ENCODE measurements at regions of chr15 and their contacts with region 1.

Region 1: DNA sequence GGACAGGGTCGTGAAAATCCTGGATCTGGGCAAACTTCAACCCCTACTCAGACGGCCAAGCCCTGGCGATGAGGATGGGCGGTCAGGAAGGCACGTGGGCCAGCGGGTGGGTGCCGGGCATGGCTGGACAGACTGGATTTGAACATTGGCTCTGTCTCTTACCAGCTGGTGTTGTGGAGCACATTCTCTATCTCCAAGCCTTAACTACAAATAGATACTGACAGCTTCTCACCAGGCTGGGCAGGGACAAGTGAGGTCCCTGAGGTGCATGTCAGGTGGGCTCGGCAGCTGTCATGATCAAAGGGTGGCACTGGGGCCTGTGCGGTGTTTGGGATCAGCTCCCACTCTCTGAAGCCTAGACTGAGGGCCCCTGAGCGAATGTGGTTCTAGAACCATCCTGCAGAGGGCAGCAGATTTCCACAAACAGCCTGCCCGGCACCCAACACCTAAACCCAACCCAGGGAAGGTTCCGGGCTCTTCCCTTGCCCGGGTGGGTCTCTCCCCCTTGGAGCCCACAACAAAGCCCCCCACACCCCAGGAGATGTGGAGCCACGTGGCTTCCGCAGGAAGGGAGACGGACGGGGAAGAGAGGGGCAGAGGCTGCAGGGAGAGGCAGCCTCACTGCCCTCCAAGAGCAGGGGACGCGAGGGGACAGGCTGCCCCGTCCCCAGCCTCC is 58.4 kb downstream of the RGMA start:
- DNase-seq: no peak
- H3K4me3 ChIP-seq: no peak overlapping the region
- H3K27me3 ChIP-seq: no peaks in the 10 kb centered on the region
- CTCF ChIP-seq: peak; percentile 84

Region 2: GRCh38 chr15:92797168-92797951 is 233.2 kb before region 1 on chr15:
- CTCF ChIA-PET with region 1: interaction called, 13 read pairs
- POLR2A ChIA-PET with region 1: no interaction called
- DNase-seq: no peak
- H3K4me3 ChIP-seq: no peak overlapping the region
- H3K27me3 ChIP-seq: no peaks in the 10 kb centered on the region
- CTCF ChIP-seq: peak; percentile 57

Region 3: GRCh38 chr15:93087825-93088199 is 57.2 kb after region 1 on chr15:
- CTCF ChIA-PET with region 1: interaction called, 10 read pairs
- POLR2A ChIA-PET with region 1: no interaction called
- DNase-seq: no peak
- H3K4me3 ChIP-seq: no peak overlapping the region
- H3K27me3 ChIP-seq: peaks cover 33% of the 10 kb centered on the region
- CTCF ChIP-seq: peak; percentile 79

Region 4: GRCh38 chr15:93974804-93975481 is 944.4 kb after region 1 on chr15:
- CTCF ChIA-PET with region 1: interaction called, 20 read pairs
- POLR2A ChIA-PET with region 1: no interaction called
- DNase-seq: no peak
- H3K4me3 ChIP-seq: no peak overlapping the region
- H3K27me3 ChIP-seq: no peaks in the 10 kb centered on the region
- CTCF ChIP-seq: peak; percentile 34; the same call in 1 of the 2 replicates

Region 5: DNA sequence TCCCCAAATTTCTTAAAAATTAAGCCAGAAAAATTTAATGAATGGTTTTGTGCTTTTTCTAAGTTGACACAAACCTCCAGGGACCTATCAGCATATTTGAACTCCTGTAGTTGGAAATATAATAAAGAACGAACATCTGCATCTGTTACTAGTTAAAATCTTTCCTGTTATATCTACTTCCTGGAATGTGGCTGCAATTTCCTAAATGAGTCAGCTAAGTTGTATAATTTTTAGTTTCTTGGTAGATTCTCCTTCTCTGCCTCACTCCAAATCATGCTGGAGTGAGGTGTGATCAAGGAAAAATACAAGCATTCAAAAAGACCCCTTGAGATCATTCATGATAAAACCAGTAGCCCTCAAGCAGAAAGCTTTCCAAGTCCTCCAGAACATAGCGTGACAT is 1094.6 kb after region 1 on chr15:
- CTCF ChIA-PET with region 1: interaction called, 74 read pairs
- POLR2A ChIA-PET with region 1: interaction called, 4 read pairs
- DNase-seq: peak; percentile 31
- H3K4me3 ChIP-seq: no peak overlapping the region
- H3K27me3 ChIP-seq: no peaks in the 10 kb centered on the region; the same call in 1 of the 2 replicates
- CTCF ChIP-seq: no peak

Region 6: GRCh38 chr15:94324117-94324826 is 1293.7 kb after region 1 on chr15:
- CTCF ChIA-PET with region 1: interaction called, 15 read pairs
- POLR2A ChIA-PET with region 1: no interaction called
- DNase-seq: no peak
- H3K4me3 ChIP-seq: no peak overlapping the region
- H3K27me3 ChIP-seq: no peaks in the 10 kb centered on the region
- CTCF ChIP-seq: peak; percentile 90